Ascending aorta (tissue), 2 donors: ENCODE measurements at regions of chr11 and their contacts with region 1.

Region 1: GRCh38 chr11:64971421-64972233 is at the start of gene MAJIN:
- DNase-seq: peak in 1 of 2 donors; percentile 88
- H3K4me3 ChIP-seq: peak within 1 kb of the TSS; percentile 34 to 62
- H3K27ac ChIP-seq: no peak within 1 kb of the TSS
- H3K4me1 ChIP-seq: peaks cover 4% of the 10 kb centered on the region in 2 donors
- H3K27me3 ChIP-seq: no peaks in the 10 kb centered on the region
- CTCF ChIP-seq: no peak
- total RNA-seq, gene MAJIN: not detected

Region 2: DNA sequence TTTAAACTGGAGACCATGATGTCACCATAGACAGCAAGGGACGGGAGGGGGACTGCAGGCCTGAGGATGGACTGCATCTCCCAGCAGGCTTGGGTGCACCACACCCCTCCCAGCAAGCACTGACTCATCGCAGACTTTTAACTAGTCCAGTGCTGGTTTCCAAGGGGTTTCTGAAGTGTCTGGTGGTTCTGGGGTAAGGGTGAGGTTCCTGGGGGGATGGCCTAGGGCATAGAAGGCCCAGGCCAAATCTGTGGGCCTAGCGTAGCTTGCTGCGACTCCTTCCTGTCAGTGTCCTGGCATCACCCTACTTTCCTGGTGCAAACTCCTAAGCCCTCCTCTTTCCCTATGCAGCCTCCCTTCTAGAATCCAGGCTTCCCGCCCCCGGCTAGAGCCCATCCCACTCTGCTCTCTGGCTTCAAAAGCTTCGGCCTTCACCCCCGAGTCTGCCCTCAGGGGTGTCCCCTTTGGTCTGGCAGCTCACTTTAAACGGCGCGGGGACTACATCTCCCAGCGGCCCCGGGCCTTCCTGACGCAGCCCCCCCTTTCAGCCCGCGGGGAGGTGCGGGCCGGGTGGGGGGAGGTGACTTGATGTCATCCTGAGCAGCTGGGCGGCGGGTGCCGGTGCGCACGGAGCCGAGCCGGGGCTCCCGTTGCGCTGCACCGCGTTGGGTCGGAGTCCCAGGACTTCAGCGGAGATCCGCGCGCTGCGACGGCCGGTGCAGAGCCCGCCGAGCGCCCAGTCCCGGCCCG is 47.4 kb before region 1 on chr11 and contains the start of gene PPP2R5B:
- intact Hi-C with region 1: loop called (anchors 5 kb)
- DNase-seq: peak; percentile 92 to 98
- H3K4me3 ChIP-seq: peak within 1 kb of the TSS; percentile 91 to 97
- H3K27ac ChIP-seq: peak within 1 kb of the TSS; percentile 89 to 96
- H3K4me1 ChIP-seq: peaks cover 10 to 21% of the 10 kb centered on the region in 2 donors
- H3K27me3 ChIP-seq: no peaks in the 10 kb centered on the region
- CTCF ChIP-seq: no peak
- total RNA-seq, gene PPP2R5B: 115 TPM

Region 3: GRCh38 chr11:65060913-65061408 is 89.3 kb after region 1 on chr11:
- intact Hi-C with region 1: no loop called
- DNase-seq: no peak
- H3K4me3 ChIP-seq: no peak overlapping the region
- H3K27ac ChIP-seq: no peak overlapping the region
- H3K4me1 ChIP-seq: no peaks in the 10 kb centered on the region
- H3K27me3 ChIP-seq: no peaks in the 10 kb centered on the region
- CTCF ChIP-seq: no peak

Region 4: DNA sequence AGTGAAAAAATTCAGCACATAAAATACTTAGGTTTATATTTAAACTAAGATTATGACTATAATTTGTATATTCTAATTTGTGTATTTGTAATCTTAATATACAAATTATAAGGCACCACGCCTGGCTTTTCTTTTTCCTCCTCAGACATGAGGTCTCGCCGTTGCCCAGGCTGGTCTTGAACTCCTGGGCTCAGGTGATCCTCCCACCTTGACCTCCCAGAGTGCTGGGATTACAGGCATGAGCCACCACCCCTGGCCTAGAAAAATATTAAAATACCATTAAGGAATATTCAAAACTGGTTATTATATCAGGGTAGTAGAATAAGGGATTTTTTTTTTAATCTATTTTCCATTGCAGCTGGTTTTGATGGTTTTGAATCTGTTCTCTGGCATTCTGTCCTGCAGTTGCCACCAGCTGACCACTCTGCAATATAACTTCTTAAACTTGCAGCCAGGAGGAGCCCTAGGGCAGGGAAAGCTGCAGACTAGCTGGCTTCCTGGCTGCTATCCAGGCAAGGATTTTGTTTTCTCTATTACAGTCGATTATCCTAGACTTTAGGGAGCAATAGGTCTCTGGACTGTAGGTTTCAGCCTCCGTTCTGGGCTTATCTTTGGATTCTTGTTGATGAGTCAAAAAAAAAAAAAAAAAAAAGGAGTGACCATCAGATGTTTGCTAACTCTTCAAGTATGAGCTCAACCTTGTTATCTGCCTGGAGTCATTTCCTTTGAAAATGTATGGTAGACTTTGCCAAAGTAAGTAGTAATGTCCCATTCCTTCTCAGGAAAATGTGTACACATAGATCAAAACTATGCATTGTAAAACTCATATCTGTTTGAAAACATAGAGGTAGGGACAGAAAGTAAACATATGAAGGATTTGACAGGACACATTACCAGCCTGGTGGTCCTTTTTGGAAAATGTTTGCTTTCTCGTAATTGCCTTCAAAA is 303.4 kb after region 1 on chr11:
- intact Hi-C with region 1: no loop called
- DNase-seq: peak in 1 of 2 donors; percentile 88
- H3K4me3 ChIP-seq: no peak overlapping the region
- H3K27ac ChIP-seq: peak overlapping the region; percentile 58 to 61
- H3K4me1 ChIP-seq: peaks cover 0 to 12% of the 10 kb centered on the region in 2 donors
- H3K27me3 ChIP-seq: no peaks in the 10 kb centered on the region
- CTCF ChIP-seq: peak; percentile 64 to 91 (median 85)